T-cell (primary cell): ENCODE measurements at regions of chr15 and their contacts with region 1.

Region 1: GRCh38 chr15:84734794-84735479 is 13.5 kb upstream of the ZNF592 start:
- DNase-seq: peak; percentile 38 to 84 (median 63)
- ATAC-seq: peak; percentile 81 to 90 (median 84)
- H3K4me3 ChIP-seq: peak overlapping the region; percentile 36 to 40
- H3K4me3 Mint-ChIP-seq: peak overlapping the region; percentile 68 to 76 (median 70)
- H3K27ac ChIP-seq: peak overlapping the region; percentile 73
- H3K27ac Mint-ChIP-seq: peak overlapping the region; percentile 89 to 90
- H3K4me1 ChIP-seq: peaks cover 27 to 43% of the 10 kb centered on the region in 2 experiments
- H3K4me1 Mint-ChIP-seq: peaks cover 44 to 47% (median 44%) of the 10 kb centered on the region in 3 donors
- H3K27me3 ChIP-seq: no peaks in the 10 kb centered on the region
- H3K27me3 Mint-ChIP-seq: no peaks in the 10 kb centered on the region

Region 2: DNA sequence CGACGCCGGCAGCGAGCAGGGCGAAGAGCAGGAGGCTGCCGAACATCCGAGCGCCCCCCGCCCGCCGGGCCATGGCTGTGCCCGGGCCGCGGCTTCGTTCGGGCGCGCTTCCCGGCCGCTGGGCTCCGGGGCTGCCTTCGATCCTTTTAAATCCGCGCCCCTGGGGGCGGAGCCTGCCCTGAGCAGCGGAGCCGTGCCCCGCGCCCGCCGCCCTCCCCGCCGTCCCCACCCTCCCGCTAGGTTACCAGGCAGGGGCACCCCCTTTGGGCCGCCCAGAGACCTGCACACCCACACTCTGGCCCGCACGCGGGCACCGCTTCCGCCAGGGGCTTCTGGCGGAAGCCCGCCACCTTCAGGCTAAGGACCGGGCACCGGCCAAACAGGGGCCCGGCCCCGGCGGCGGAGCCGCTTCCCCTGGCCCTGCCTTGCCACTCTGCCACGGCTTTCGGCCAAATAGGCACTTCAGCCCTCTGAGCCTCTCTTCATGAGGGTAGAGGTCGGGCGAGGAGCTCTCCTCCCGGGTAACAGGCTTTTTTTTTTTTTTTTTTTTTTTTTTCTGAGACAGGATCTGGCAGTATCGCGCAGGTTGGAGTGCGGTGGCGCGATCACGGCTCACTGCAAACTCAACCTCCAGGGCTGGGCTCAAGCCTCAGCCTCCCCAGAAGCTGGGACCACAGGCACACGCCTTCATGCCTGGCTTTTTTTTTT is 76.7 kb before region 1 on chr15 and contains the start of gene NMB:
- CTCF ChIA-PET with region 1: interaction called, 3 to 10 read pairs
- POLR2A ChIA-PET with region 1: no interaction called
- DNase-seq: peak; percentile 68 to 91 (median 80)
- ATAC-seq: peak; percentile 72 to 77 (median 76)
- H3K4me3 ChIP-seq: peak within 1 kb of the TSS; percentile 62 to 76
- H3K4me3 Mint-ChIP-seq: peak within 1 kb of the TSS; percentile 73 to 80 (median 76)
- H3K27ac ChIP-seq: peak within 1 kb of the TSS; percentile 64
- H3K27ac Mint-ChIP-seq: peak within 1 kb of the TSS; percentile 81 to 84
- H3K4me1 ChIP-seq: peaks cover 7 to 45% of the 10 kb centered on the region in 2 experiments
- H3K4me1 Mint-ChIP-seq: peaks cover 27 to 46% (median 34%) of the 10 kb centered on the region in 3 donors
- H3K27me3 ChIP-seq: no peaks in the 10 kb centered on the region
- H3K27me3 Mint-ChIP-seq: no peaks in the 10 kb centered on the region
- total RNA-seq, gene NMB: 1.3 to 3.5 (median 2.9) TPM

Region 3: GRCh38 chr15:84716036-84716799 is 18.7 kb before region 1 on chr15 and contains the start of gene SEC11A:
- CTCF ChIA-PET with region 1: interaction called, 4 to 10 read pairs
- POLR2A ChIA-PET with region 1: interaction called, 5 to 8 read pairs
- DNase-seq: peak; percentile 80 to 93 (median 88)
- ATAC-seq: peak; percentile 96 to 97 (median 96)
- H3K4me3 ChIP-seq: peak within 1 kb of the TSS; percentile 65 to 95
- H3K4me3 Mint-ChIP-seq: peak within 1 kb of the TSS; percentile 88 to 97 (median 89)
- H3K27ac ChIP-seq: peak within 1 kb of the TSS; percentile 78
- H3K27ac Mint-ChIP-seq: peak within 1 kb of the TSS; percentile 97 to 98
- H3K4me1 ChIP-seq: peaks cover 25% of the 10 kb centered on the region in 2 experiments
- H3K4me1 Mint-ChIP-seq: peaks cover 47 to 63% (median 49%) of the 10 kb centered on the region in 3 donors
- H3K27me3 ChIP-seq: no peaks in the 10 kb centered on the region
- H3K27me3 Mint-ChIP-seq: no peaks in the 10 kb centered on the region
- total RNA-seq, gene SEC11A: 52.3 to 68.9 (median 66.5) TPM

Region 4: DNA sequence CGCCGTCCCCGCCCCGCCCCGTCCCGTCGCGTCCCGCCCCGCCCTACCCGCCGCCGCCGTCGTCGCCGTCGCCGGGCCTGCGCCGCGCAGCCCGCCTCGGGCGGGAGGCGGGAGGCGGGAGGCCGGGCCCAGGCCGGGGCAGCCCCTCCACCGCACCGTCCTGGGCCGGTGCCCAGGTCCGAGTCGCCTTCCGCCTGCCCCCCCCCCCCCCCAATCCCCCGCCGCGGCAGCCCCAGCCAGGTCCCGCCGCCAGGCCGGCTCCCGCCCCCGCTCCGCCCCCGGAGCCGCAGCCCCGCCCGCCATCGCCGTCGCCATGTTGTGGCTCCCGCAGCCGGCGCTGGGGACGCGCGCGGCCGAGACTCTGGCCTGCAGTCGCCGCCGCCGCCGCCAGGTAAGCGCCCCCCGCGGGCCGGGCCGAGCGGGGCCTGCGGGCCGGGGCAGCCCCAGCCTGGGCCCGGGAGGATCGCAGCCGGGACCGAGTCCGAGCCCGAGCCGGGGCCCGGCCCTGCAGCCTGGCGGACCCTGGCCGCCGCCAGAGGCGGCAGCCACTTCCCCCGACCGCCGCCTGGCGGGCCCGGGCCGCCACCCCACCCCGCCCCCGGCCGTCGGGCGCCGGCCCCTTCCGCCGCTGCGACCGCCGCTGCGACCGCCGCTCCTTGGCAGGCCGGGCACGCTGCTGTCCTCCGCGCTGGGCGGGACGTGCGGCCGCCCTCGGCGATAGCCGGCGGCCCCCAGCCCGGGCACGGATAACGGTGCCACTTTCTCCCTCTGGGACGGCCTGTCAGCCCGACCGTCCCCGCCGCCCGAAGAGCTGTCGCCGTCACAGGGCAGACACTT is 13.6 kb after region 1 on chr15 and contains the start of gene ZNF592:
- CTCF ChIA-PET with region 1: interaction called, 7 to 18 read pairs
- POLR2A ChIA-PET with region 1: interaction called, 5 read pairs
- DNase-seq: peak; percentile 57 to 89 (median 76)
- ATAC-seq: peak; percentile 76 to 80 (median 78)
- H3K4me3 ChIP-seq: peak within 1 kb of the TSS; percentile 87 to 94
- H3K4me3 Mint-ChIP-seq: peak within 1 kb of the TSS; percentile 95 to 98 (median 97)
- H3K27ac ChIP-seq: peak within 1 kb of the TSS; percentile 94
- H3K27ac Mint-ChIP-seq: peak within 1 kb of the TSS; percentile 95 to 99
- H3K4me1 ChIP-seq: peaks cover 26 to 51% of the 10 kb centered on the region in 2 experiments
- H3K4me1 Mint-ChIP-seq: peaks cover 70 to 72% (median 70%) of the 10 kb centered on the region in 3 donors
- H3K27me3 ChIP-seq: no peaks in the 10 kb centered on the region
- H3K27me3 Mint-ChIP-seq: no peaks in the 10 kb centered on the region
- total RNA-seq, gene ZNF592: 34.5 to 43.6 (median 39.0) TPM

Region 5: GRCh38 chr15:85059734-85060133 is 324.8 kb after region 1 on chr15:
- CTCF ChIA-PET with region 1: no interaction called
- POLR2A ChIA-PET with region 1: no interaction called
- DNase-seq: no peak
- ATAC-seq: no peak
- H3K4me3 ChIP-seq: no peak overlapping the region
- H3K4me3 Mint-ChIP-seq: no peak overlapping the region
- H3K27ac ChIP-seq: no peak overlapping the region
- H3K27ac Mint-ChIP-seq: no peak overlapping the region
- H3K4me1 ChIP-seq: no peaks in the 10 kb centered on the region
- H3K4me1 Mint-ChIP-seq: peaks cover 30 to 50% (median 39%) of the 10 kb centered on the region in 3 donors
- H3K27me3 ChIP-seq: no peaks in the 10 kb centered on the region
- H3K27me3 Mint-ChIP-seq: no peaks in the 10 kb centered on the region

Region 6: DNA sequence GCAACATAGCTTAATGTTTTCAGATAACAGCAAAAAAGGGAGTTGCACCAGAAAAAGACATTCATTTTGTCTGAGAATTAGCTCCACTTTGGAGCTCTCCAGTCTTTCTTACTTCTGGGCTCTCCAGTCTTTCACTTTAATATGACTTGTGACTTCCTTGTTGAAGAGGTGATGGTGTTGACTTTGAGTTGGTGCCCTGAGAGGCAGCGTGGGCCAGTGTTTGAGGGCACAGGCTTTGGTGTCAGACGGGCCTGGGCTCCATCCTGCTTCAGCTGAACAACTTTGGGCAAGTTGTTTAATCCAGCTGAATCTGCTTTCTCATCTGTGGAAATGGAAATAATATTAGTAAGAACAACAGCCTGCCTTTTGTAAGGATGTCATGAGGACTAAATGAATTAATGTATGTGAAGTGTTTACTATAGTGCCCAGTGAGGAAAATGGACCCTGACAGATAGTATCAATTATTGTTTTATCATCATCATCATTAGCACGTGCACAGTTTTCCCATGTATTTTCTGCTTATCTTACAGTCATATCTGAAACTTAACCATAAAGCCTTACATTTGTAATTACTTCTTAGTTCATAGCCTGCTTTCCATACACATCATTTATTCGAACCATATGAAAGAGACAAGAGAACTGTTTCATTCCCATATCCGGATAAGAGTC is 355.1 kb after region 1 on chr15:
- CTCF ChIA-PET with region 1: no interaction called
- POLR2A ChIA-PET with region 1: interaction called in 1 of 2 experiments, 10 read pairs
- DNase-seq: no peak
- ATAC-seq: no peak
- H3K4me3 ChIP-seq: no peak overlapping the region
- H3K4me3 Mint-ChIP-seq: no peak overlapping the region
- H3K27ac ChIP-seq: no peak overlapping the region
- H3K27ac Mint-ChIP-seq: no peak overlapping the region
- H3K4me1 ChIP-seq: no peaks in the 10 kb centered on the region
- H3K4me1 Mint-ChIP-seq: no peaks in the 10 kb centered on the region
- H3K27me3 ChIP-seq: no peaks in the 10 kb centered on the region
- H3K27me3 Mint-ChIP-seq: no peaks in the 10 kb centered on the region